Activated B cell treated with CpG ODN at 0.5 μM for 24 hours (primary cell): ENCODE measurements at regions of chr7 and their contacts with region 1.

Region 1: DNA sequence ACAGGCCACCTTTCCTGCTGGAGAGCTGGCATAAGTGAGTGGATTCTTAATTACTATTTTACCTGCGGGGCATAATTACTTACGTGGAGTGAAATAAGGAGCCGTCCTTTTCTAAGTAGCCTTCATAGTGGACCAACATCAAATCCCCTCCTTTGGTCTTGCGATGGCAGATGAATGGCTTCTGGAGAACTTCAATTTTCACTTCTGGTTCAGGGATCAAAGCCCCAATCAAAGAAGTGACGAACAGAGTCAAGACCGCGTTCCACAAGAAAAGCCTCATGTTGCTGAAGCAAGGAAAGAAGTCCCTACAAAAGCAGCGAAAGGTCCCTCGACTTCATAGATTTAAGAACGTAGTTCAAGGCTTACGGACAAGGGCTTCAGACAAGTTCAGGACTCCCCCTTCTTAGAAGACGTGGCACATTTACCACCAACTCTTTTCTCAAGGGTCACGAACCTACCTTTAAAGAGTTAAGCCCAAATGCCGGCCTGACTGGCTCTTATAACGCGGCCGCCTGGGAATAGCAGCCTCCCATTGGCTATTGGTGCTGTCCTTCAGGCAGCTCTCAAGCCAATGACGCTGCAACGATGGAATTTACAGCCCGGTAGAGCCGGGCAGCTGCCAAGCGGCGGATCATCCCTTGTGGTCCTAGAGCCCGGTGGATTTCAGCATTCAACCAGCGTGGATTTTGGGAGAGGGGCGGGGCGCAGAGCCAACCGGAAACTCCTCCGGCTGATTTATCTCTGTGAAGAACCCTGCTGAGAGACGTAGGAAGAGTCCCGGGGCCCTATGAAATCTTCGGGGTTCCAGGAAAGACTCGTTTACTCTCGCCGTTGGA is at the start of gene FKBP14:
- DNase-seq: peak; percentile 72
- ATAC-seq: peak; percentile 76
- H3K4me3 Mint-ChIP-seq: no peak within 1 kb of the TSS
- H3K27ac Mint-ChIP-seq: peak within 1 kb of the TSS; percentile 91
- H3K4me1 Mint-ChIP-seq: peaks cover 38% of the 10 kb centered on the region
- H3K27me3 Mint-ChIP-seq: no peaks in the 10 kb centered on the region
- CTCF ChIP-seq: no peak
- total RNA-seq, gene FKBP14: 7.7 and 11.4 TPM in 2 replicates

Region 2: GRCh38 chr7:29955799-29956486 is 70.5 kb before region 1 on chr7:
- CTCF ChIA-PET with region 1: interaction called, 5 read pairs
- POLR2A ChIA-PET with region 1: interaction called, 6 read pairs
- intact Hi-C with region 1: loop called (anchors 2 kb)
- DNase-seq: no peak
- ATAC-seq: peak; percentile 92
- H3K4me3 Mint-ChIP-seq: no peak overlapping the region
- H3K27ac Mint-ChIP-seq: peak overlapping the region; percentile 72
- H3K4me1 Mint-ChIP-seq: peaks cover 29% of the 10 kb centered on the region
- H3K27me3 Mint-ChIP-seq: no peaks in the 10 kb centered on the region
- CTCF ChIP-seq: no peak

Region 3: DNA sequence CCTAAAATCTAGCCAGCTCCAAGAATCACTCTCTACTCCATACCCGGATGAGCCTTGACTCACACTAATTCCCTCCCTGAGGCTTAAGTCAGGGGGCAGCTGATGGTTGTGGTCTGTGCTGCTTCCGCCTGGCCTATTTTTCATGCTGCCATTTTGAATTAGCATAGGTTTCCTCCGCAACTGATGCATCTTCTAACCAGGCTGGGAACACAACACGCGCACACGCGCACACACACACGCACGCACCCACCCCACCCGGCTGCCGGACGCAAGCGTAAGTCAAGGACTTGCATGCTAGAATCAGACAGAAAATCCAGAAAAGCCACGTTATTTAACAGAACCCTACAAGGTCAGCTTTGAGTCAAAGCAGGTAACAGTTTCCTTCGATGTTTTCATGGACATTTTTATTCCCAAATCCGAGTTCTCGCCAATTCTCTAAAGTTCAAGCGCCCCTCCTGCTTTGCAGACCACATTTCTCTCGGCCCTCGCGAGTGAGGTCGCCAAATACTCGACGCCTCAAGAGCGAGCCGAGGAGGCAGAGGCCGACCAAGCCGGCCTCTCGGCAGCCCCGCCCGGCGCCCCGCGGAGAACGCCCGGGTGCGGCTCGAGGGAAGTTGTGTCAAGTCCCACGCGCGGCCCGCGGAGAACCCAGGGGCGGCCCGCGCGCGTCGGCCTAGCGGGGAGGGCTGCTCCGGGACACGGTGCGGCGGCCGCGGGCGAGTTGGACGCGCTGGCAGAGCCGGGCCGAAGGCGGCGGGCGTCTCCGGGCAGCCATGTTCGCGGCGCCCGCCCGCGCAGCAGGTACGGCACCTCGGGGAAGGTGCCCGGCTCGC is 37.8 kb before region 1 on chr7:
- CTCF ChIA-PET with region 1: interaction called, 4 read pairs
- POLR2A ChIA-PET with region 1: interaction called, 66 read pairs
- intact Hi-C with region 1: loop called (anchors 1 kb)
- DNase-seq: peak; percentile 60
- ATAC-seq: peak; percentile 27
- H3K4me3 Mint-ChIP-seq: peak overlapping the region; percentile 93
- H3K27ac Mint-ChIP-seq: peak overlapping the region; percentile 97
- H3K4me1 Mint-ChIP-seq: peaks cover 37% of the 10 kb centered on the region
- H3K27me3 Mint-ChIP-seq: no peaks in the 10 kb centered on the region
- CTCF ChIP-seq: no peak

Region 4: DNA sequence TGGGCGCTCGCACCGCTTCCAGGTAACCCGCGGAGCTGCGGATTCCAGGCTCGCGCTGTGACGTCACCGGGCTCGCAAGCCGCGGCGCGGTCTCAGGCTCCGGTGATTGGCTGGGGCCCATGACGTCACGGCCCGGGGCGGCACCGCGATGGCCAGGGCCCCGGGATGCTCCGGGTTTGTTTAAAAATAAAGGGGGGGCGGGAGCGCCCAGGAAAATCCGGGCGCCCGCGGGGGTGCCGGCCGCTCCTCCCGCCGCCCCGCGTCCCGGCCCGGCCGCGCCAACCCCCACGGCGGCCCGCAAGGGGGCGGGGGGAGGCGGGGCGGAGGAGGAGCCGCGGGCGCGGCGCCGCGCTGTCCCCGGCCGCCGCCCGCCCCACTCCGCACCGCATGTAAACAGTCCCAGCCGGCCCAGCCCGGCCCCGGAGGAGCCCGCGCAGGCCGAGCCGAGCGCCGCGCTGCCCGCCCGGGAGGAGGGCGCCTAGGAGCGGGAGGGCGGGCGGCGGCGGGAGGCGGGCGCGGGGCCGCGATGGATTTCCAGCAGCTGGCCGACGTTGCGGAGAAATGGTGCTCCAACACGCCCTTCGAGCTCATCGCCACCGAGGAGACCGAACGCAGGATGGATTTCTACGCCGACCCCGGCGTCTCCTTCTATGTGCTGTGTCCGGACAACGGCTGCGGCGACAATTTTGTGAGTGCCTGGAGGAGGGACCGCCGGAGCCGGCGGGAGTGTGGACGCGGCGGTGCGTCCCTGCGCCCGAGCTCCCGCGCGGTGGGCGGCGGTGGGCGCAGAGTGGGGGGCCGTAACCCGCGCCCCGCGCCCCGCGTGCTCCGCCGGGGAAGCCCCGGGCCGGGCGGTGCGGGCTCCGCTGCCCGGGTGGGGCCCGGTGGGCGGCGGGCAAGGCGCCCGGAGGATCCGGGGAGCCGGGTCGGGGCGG is 108.4 kb after region 1 on chr7 and contains the start of gene MTURN:
- CTCF ChIA-PET with region 1: no interaction called
- POLR2A ChIA-PET with region 1: no interaction called
- intact Hi-C with region 1: loop called (anchors 2 kb)
- DNase-seq: peak; percentile 85
- ATAC-seq: peak; percentile 82
- H3K4me3 Mint-ChIP-seq: peak within 1 kb of the TSS; percentile 91
- H3K27ac Mint-ChIP-seq: peak within 1 kb of the TSS; percentile 77
- H3K4me1 Mint-ChIP-seq: peaks cover 12% of the 10 kb centered on the region
- H3K27me3 Mint-ChIP-seq: peaks cover 11% of the 10 kb centered on the region
- CTCF ChIP-seq: no peak
- total RNA-seq, gene MTURN: 2.8 and 4.6 TPM in 2 replicates

Region 5: DNA sequence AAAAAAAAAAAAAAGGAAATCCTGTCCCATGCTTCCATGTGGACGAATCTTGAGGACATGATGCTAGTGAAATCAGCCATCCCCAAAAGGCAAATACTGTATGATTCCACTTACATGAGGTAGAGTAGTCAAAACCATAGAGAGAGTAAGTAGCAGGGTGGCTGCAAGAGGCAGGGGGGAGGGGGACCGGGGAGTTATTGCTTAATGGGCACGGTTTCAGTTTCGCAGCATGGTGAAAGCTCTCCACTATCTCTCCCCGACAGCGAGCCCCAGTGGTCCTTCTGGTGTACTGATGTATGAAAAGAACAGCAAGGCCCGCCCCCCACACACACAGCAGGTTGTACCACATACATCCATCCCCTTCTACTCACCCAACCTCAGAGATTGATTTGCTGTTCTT is 419.3 kb after region 1 on chr7:
- CTCF ChIA-PET with region 1: no interaction called
- POLR2A ChIA-PET with region 1: no interaction called
- intact Hi-C with region 1: loop called (anchors 5 kb)
- DNase-seq: peak; percentile 66
- ATAC-seq: peak; percentile 100
- H3K4me3 Mint-ChIP-seq: no peak overlapping the region
- H3K27ac Mint-ChIP-seq: peak overlapping the region; percentile 64
- H3K4me1 Mint-ChIP-seq: peaks cover 6% of the 10 kb centered on the region
- H3K27me3 Mint-ChIP-seq: no peaks in the 10 kb centered on the region
- CTCF ChIP-seq: no peak

Region 6: DNA sequence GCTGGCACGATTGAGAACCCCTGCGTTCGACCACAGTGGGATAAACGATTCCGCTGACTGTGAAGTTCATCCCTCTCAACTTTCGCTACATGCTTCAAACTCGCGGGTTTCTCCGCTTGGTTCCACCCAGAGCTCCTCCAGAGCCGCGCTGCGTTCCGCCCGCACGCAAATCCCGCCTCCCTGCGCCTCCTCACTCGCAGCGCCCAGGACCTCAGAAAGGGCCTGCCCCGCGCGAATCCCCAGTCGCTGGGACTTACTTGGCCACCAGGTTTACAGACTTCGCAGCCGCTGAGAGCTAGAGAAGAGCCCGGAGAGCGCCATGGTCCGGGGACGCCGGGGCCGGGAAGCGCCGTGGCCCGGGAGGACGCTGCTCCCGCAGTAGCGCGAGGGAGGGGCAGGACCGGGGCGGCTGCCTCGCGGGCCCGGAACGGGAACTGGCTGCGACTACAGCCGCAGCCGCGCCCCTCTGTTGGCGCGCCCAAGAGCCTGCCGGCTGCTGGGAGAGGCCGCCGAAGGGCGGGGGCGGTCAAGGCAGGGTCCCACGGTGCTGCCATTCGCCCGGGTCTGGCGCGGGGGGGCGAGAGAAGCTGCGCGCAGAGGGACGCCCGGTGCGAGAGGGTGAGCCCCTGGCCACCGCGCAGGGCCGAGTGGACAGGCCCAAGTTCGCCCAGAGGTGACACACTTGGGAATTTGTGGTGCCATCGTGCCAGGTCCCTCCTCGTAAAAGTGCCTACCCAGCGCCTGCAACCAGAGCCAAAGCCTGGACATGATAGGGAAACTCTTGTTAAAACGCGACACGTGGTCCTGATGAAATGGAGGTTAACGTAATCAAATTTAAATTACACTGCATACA is 452.1 kb after region 1 on chr7 and contains the start of gene NOD1:
- CTCF ChIA-PET with region 1: no interaction called
- POLR2A ChIA-PET with region 1: interaction called, 5 read pairs
- intact Hi-C with region 1: loop called (anchors 5 kb)
- DNase-seq: peak; percentile 70
- ATAC-seq: peak; percentile 89
- H3K4me3 Mint-ChIP-seq: peak within 1 kb of the TSS; percentile 95
- H3K27ac Mint-ChIP-seq: peak within 1 kb of the TSS; percentile 87
- H3K4me1 Mint-ChIP-seq: peaks cover 54% of the 10 kb centered on the region
- H3K27me3 Mint-ChIP-seq: no peaks in the 10 kb centered on the region
- CTCF ChIP-seq: no peak
- total RNA-seq, gene NOD1: 11.7 and 14.0 TPM in 2 replicates